Naive thymus-derived CD4-positive, alpha-beta T cell (primary cell): ENCODE measurements at regions of chr14 and their contacts with region 1.

Region 1: DNA sequence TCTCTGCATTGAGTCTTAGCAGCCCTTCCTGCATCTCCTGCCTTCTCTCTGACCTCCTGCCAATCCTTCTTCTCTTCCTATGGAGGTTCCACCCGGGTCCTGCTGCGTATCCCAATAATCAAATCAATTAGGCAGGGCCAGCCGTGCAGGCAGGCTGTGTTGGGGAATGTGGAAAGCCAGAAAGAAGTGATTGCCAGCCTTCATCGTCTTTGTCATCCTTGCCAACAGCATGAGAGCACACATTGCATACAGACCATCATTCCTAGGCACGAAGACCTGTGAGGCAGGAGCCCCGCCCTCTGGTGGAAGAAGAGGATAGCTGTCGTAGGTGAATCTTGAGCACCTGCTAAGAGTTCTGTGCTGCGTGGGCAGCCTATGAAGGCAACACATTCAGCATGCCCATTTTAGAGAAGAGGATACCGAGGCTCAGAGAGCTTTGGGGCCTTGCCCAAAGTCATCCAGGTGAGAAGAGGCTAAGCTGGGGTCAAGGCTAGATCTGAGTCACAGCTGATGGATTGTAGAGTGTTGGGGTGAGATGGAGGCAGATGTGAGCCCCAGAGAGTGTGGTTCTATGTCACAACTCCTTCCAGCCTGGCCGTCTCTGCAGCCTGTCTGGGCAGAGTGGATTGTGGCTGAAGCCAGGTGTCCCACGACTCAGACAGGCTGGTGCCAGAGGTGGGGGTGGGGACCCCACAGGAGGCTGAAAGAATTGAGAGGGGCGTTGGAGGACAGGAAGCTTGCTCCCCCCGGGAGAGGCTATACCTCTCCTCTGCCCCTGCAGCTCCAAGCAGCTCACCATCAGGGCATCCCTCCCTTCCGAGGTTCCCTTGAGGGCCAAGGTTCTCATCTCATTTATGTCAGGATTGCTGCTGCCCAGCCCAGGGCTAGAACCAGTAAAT is 12.7 kb downstream of the C14orf132 start:
- DNase-seq: peak in 4 of 9 donors; percentile 7 to 29 (median 20)
- ATAC-seq: no peak
- H3K4me3 ChIP-seq: no peak overlapping the region
- H3K4me3 Mint-ChIP-seq: no peak overlapping the region
- H3K27ac ChIP-seq: no peak overlapping the region
- H3K27ac Mint-ChIP-seq: no peak overlapping the region
- H3K4me1 ChIP-seq: no peaks in the 10 kb centered on the region
- H3K4me1 Mint-ChIP-seq: peaks cover 0 to 7% (median 0%) of the 10 kb centered on the region in 7 donors
- H3K27me3 ChIP-seq: no peaks in the 10 kb centered on the region
- H3K27me3 Mint-ChIP-seq: peaks cover 0 to 9% (median 6%) of the 10 kb centered on the region in 5 donors

Region 2: DNA sequence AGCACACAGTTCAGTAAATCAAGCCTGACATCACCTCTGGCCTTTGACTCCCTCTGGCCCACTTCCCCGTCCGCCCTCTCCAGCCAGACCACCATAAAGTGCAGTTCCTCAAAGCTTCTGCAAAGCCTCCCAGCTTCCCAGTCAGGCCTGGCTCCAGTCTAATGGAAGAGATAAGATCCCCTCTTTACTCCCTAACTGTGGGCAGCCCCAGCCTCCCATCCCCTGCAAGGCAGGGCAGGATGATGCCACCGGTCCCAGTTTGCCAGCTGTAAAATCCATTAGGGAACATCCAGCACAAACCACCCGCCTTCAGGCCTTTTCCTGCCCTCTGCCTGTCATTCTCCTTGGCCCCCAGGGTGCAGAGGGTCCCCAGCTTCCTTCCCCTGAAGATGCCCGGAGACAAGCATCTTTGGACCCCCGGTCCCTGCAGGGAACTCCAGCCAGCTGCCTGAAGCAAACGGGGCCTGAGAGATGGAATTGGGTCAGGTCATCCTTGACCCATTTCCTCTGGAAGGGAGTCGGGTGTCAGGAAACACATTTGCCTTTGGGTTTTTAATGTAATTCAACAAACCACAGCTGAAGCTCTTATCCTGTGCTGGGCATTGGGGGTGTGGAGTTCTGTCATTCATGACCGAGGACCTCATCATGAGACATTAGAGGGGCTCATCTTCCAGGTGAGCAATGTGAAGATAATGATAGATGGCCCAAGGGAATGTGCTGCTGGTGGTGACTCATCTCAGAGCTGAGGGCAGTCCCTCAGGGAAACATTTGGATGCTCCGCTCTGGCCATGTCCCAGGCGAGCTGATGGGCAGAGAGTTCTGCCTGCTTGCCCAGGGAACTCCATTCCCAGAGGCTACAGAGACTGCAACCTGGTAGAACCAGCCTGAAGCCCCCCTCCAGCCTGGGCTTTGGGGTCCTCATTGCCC is 638.3 kb before region 1 on chr14:
- CTCF ChIA-PET with region 1: no interaction called
- POLR2A ChIA-PET with region 1: no interaction called
- intact Hi-C with region 1: no loop called
- DNase-seq: no peak
- ATAC-seq: no peak
- H3K4me3 ChIP-seq: no peak overlapping the region
- H3K4me3 Mint-ChIP-seq: no peak overlapping the region
- H3K27ac ChIP-seq: no peak overlapping the region
- H3K27ac Mint-ChIP-seq: peak overlapping the region in 1 of 9 donors; percentile 67
- H3K4me1 ChIP-seq: no peaks in the 10 kb centered on the region
- H3K4me1 Mint-ChIP-seq: peaks cover 0 to 13% (median 0%) of the 10 kb centered on the region in 7 donors
- H3K27me3 ChIP-seq: no peaks in the 10 kb centered on the region
- H3K27me3 Mint-ChIP-seq: no peaks in the 10 kb centered on the region

Region 3: DNA sequence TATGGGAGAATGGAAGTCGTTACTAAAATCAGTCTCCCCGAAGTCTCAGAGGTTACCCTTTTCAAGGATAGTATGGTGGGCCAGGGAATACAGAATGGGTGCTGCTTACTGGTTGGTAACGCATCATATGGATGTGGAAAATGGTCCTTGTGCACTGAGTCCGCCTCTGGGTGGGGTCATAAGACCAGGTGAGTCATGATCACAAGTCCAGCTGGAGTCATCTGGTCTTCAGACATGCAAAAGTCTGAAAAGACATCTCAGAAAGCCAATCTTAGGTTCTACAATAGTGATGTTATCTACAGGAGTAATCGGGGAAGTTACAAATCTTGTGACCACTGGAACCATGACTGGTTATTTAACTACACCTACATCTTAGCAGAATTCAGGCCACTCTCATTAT is 437.5 kb before region 1 on chr14:
- CTCF ChIA-PET with region 1: no interaction called
- POLR2A ChIA-PET with region 1: no interaction called
- intact Hi-C with region 1: no loop called
- DNase-seq: no peak
- ATAC-seq: no peak
- H3K4me3 ChIP-seq: no peak overlapping the region
- H3K4me3 Mint-ChIP-seq: no peak overlapping the region
- H3K27ac ChIP-seq: no peak overlapping the region
- H3K27ac Mint-ChIP-seq: no peak overlapping the region
- H3K4me1 ChIP-seq: no peaks in the 10 kb centered on the region
- H3K4me1 Mint-ChIP-seq: no peaks in the 10 kb centered on the region
- H3K27me3 ChIP-seq: no peaks in the 10 kb centered on the region
- H3K27me3 Mint-ChIP-seq: peaks cover 15 to 47% (median 32%) of the 10 kb centered on the region in 5 donors

Region 4: DNA sequence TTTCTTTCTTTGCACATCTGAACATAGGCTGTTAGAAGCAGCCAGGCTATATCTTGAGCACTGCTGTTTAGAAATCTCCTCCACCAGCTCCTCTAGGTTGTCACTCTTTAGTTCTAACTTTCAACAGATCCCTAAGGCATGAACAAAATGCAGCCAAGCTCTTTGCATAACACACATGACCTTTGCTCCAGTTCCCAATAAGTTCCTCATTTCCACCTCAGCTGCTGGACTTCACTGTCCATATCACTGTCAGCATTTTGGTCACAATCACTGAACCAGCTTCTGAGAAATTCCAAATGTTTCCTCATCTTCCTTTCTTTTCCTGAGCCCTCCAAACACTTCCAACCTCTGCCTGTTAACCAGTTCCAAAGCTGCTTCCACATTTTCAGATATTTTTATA is 40.3 kb before region 1 on chr14:
- CTCF ChIA-PET with region 1: interaction called, 3 read pairs
- POLR2A ChIA-PET with region 1: no interaction called
- intact Hi-C with region 1: loop called in 1 of 2 experiments (anchors 1 kb)
- DNase-seq: no peak
- ATAC-seq: no peak
- H3K4me3 ChIP-seq: no peak overlapping the region
- H3K4me3 Mint-ChIP-seq: no peak overlapping the region
- H3K27ac ChIP-seq: no peak overlapping the region
- H3K27ac Mint-ChIP-seq: peak overlapping the region in 1 of 9 donors; percentile 74
- H3K4me1 ChIP-seq: no peaks in the 10 kb centered on the region
- H3K4me1 Mint-ChIP-seq: peaks cover 0 to 1% (median 0%) of the 10 kb centered on the region in 7 donors
- H3K27me3 ChIP-seq: no peaks in the 10 kb centered on the region
- H3K27me3 Mint-ChIP-seq: peaks cover 0 to 14% (median 6%) of the 10 kb centered on the region in 5 donors

Region 5: DNA sequence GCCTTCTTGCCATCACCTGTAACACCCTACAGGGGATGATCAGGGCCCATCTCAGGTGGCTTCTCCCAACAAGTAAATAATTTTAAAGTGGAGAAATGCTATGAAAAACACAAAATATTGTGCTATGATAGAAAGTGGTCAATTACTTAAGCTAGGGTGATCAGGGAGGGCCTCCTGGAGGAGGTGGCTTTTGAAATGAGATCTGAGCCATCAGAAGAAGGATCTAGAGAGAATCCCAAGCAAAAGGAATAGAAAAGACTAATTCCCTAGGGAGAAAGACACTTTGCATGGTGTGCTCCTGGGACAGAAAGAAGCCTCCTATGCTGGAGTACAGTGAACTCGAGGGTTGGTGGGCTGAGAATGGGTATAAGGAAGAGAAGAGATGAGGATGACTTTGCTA is 20.2 kb before region 1 on chr14:
- CTCF ChIA-PET with region 1: no interaction called
- POLR2A ChIA-PET with region 1: no interaction called
- intact Hi-C with region 1: no loop called
- DNase-seq: no peak
- ATAC-seq: no peak
- H3K4me3 ChIP-seq: no peak overlapping the region
- H3K4me3 Mint-ChIP-seq: no peak overlapping the region
- H3K27ac ChIP-seq: no peak overlapping the region
- H3K27ac Mint-ChIP-seq: no peak overlapping the region
- H3K4me1 ChIP-seq: peaks cover 0 to 12% of the 10 kb centered on the region in 2 donors
- H3K4me1 Mint-ChIP-seq: peaks cover 7 to 39% (median 28%) of the 10 kb centered on the region in 7 donors
- H3K27me3 ChIP-seq: no peaks in the 10 kb centered on the region
- H3K27me3 Mint-ChIP-seq: peaks cover 0 to 3% (median 0%) of the 10 kb centered on the region in 5 donors